PC-9 (cell line): ENCODE measurements at regions of chr12 and their contacts with region 1.

Region 1: DNA sequence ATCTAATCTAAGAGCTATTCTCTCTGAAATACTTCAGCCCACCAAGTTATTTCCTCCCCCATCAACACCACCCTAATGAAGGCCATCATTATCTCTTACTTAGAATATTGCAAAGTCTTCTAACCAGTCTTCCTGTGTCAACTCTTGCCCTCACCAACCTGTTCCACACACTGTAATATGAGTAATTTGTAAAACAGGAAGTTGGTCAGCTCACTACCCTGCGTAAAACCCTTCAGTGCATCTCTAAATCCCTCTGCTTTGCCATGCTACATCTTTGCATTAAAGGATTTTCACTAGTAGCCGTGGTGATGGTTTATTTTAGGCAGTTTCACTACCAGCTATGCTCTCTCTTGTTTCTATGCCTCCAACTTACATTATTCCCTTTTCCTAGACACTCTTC is 70.0 kb downstream of the KIF21A start:
- DNase-seq: no peak
- H3K4me3 ChIP-seq: no peak overlapping the region
- H3K27ac ChIP-seq: no peak overlapping the region
- H3K4me1 ChIP-seq: peaks cover 11% of the 10 kb centered on the region
- H3K27me3 ChIP-seq: no peaks in the 10 kb centered on the region
- CTCF ChIP-seq: no peak

Region 2: GRCh38 chr12:38144022-38144421 is 1228.9 kb before region 1 on chr12:
- CTCF ChIA-PET with region 1: interaction called, 10 read pairs
- POLR2A ChIA-PET with region 1: no interaction called
- intact Hi-C with region 1: no loop called
- DNase-seq: no peak
- H3K4me3 ChIP-seq: no peak overlapping the region
- H3K27ac ChIP-seq: no peak overlapping the region
- H3K4me1 ChIP-seq: peaks cover 16% of the 10 kb centered on the region
- H3K27me3 ChIP-seq: no peaks in the 10 kb centered on the region
- CTCF ChIP-seq: no peak

Region 3: DNA sequence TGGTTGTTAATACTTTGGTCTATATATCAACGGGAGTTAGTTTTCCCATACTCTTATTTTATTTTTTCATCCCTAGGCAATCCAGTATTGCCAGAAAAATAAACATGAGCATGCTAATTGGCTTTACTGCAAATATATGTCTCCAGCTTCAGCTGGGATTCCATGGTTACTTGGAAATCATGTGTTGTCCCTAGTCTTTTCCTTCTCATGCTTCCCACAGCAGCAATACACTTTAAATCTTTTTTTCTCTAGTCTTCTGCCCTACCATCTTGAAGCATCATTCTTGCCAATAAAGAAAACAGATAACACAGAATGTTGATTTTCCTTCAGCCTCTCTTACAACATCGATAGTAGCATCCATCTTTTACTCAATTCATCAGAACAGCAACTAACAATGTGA is 672.7 kb after region 1 on chr12:
- CTCF ChIA-PET with region 1: no interaction called
- POLR2A ChIA-PET with region 1: no interaction called
- intact Hi-C with region 1: no loop called
- DNase-seq: no peak
- H3K4me3 ChIP-seq: no peak overlapping the region
- H3K27ac ChIP-seq: no peak overlapping the region
- H3K4me1 ChIP-seq: no peaks in the 10 kb centered on the region
- H3K27me3 ChIP-seq: no peaks in the 10 kb centered on the region
- CTCF ChIP-seq: no peak